Thyroid gland (tissue), 4 donors: ENCODE measurements at regions of chr22 and their contacts with region 1.

Region 1: GRCh38 chr22:40525249-40525884 is 111.2 kb downstream of the MRTFA start:
- DNase-seq: peak; percentile 31 to 38
- H3K4me3 ChIP-seq: no peak overlapping the region
- H3K27ac ChIP-seq: peak overlapping the region in 1 of 3 donors; percentile 19
- H3K4me1 ChIP-seq: peaks cover 34% of the 10 kb centered on the region in 2 donors
- H3K27me3 ChIP-seq: no peaks in the 10 kb centered on the region
- CTCF ChIP-seq: peak in 5 of 6 experiments; percentile 21 to 55 (median 39)
- POLR2A ChIP-seq: no peak

Region 2: DNA sequence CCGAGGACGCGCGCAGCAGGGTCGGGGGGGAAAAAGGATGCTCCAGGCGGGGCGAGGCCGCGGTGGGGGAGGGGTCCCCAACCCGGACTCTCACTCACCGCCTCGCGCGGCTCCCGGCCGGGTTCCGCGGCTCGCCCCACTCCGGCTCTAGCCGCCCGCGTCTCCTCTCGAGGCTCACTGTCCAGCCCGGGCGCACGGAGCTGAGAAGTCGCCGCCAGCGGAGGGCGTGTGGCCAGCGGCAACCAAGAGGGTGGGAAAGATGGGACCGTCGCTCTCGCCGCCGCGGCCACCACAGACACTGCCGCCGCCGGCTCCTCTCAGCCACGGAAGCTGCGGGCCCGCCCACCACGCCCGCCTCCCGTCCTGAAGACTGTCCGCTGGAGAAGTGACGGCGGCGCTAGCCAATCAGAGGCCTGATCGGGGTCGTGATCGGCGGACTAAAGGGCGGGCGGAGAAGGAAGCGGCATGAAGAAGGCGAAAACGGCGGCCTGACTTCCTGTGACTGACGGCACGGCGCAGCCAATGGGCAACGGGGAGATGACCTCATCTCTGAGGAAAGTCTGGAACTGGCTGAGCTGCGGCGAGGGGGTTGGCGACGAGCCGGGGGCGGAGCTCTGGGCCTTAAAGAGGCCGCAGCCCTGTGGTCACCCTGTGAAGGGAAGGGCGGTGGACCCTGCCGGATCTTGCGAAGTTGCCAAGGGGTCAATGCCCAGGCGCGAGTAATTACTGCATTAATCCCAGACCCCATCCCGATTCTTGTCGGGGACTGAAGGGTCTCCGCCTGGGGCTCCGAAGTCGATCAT is 111.2 kb after region 1 on chr22 and contains the start of gene MRTFA:
- intact Hi-C with region 1: loop called (anchors 10 kb)
- DNase-seq: peak; percentile 100
- H3K4me3 ChIP-seq: peak within 1 kb of the TSS; percentile 59 to 94 (median 89)
- H3K27ac ChIP-seq: peak within 1 kb of the TSS; percentile 46 to 86 (median 81)
- H3K4me1 ChIP-seq: peaks cover 6 to 33% of the 10 kb centered on the region in 2 donors
- H3K27me3 ChIP-seq: no peaks in the 10 kb centered on the region
- CTCF ChIP-seq: peak in 1 of 6 experiments; percentile 4
- POLR2A ChIP-seq: peak; percentile 95 to 99
- total RNA-seq, gene MRTFA: 81.4 to 210 (median 122) TPM